ENCODE measurements at regions of chr3 and their contacts with region 1.

Region 1: DNA sequence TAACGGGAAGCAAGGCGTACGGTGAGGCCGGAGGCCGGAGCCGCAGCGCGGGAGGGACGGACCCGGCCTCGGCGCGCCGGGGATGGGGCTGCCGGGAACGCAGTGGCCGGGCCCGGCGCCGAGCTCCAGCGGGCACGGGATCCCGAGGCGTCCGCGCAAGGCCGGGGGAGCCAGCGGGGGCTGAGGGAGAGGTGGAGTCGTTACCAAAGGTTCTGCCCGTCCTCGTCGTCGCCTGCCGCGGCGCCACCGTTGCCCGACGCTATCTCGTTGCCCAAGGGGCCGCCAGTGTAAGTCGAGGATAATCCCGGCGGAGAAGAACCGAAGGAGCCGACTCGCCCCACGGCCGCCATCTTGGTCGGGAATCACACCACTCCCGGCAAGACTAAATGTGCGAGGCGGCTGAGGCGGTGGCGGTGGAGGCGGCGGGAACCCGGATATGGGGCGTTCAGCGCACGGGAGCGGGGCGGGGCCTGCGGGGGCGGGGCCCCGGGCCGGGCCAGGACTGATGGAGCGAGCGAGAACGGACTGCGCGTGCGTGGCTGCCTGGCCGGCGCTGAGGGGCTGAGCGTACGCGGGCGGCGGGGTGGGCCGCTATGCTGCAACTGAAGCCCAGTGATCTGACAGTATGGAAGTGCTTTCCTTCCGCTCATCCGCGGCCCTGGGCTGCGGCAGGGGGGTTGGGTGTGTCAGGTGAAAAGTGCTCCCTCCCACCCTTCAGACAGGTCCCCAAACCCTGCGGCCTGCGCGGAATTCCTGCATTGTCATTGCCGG is at the start of gene DYNC1LI1:
- H3K4me3 Mint-ChIP-seq: peak within 1 kb of the TSS; percentile 87
- H3K27ac Mint-ChIP-seq: peak within 1 kb of the TSS; percentile 92
- H3K4me1 Mint-ChIP-seq: peaks cover 16% of the 10 kb centered on the region
- H3K27me3 Mint-ChIP-seq: no peaks in the 10 kb centered on the region

Region 2: DNA sequence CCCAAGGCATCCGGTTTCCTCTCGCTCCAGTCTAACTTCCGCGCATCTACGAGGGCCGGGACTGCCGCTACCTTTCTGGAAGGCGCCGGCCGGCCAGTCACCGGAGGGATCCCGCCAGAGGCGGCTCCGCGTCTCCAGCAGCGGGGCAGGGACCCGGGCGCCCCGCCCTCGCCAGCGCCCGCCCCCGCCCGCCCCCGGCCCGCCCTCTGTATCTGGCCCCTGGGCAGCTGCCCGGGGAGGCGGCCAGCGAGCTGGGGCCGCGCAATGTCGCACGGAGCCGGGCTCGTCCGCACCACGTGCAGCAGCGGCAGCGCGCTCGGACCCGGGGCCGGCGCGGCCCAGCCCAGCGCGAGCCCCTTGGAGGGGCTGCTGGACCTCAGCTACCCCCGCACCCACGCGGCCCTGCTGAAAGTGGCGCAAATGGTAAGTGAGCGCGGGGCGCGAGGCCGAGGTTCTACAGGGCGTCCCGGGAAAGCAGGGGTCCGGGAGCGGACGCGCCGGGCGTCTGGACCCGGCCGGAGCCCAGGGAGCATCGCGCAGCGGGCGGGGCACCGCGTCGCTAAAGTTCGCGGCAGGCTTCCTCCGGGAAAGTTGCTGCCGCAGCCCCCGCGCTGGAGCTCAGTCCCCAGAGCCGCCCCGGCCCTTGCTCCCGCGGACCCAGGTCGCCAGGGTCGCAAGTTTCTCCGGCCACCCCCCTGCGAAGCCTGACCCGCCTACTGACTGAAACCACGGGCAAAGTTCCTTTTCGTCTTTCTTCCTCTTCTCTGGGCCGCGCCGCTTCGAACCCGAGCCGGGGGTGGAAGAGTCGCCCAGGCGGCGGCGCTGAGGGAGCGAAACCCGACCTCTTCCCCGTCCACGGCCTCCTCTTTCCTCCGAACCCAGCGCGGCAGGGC is 178.7 kb before region 1 on chr3 and contains the start of gene CMTM7:
- intact Hi-C with region 1: loop called (anchors 10 kb)
- H3K4me3 Mint-ChIP-seq: peak within 1 kb of the TSS; percentile 98
- H3K27ac Mint-ChIP-seq: peak within 1 kb of the TSS; percentile 98
- H3K4me1 Mint-ChIP-seq: peaks cover 54% of the 10 kb centered on the region
- H3K27me3 Mint-ChIP-seq: no peaks in the 10 kb centered on the region

Region 3: DNA sequence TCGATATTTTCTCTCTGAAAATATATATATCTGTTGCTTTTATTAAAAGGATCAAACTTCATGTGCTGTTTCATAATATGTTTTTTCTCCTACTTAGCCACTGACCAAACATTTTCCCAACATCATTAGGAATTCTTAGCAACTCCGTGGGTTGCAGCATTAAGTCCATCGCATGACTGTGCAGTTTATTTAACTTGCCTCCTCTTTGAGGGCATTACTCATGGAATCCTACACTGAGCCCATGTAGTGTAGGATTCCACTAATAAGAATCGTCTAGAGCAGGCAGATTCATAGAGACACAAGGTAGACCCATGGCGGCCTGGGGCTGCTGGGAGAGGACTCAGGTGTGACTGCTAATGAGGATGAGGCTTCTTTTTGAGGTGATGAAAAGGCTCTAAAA is 117.3 kb before region 1 on chr3:
- intact Hi-C with region 1: no loop called
- H3K4me3 Mint-ChIP-seq: no peak overlapping the region
- H3K27ac Mint-ChIP-seq: no peak overlapping the region
- H3K4me1 Mint-ChIP-seq: peaks cover 30% of the 10 kb centered on the region
- H3K27me3 Mint-ChIP-seq: no peaks in the 10 kb centered on the region

Region 4: GRCh38 chr3:32522682-32523081 is 47.9 kb before region 1 on chr3:
- intact Hi-C with region 1: loop called (anchors 2 kb)
- H3K4me3 Mint-ChIP-seq: no peak overlapping the region
- H3K27ac Mint-ChIP-seq: no peak overlapping the region
- H3K4me1 Mint-ChIP-seq: peaks cover 8% of the 10 kb centered on the region
- H3K27me3 Mint-ChIP-seq: no peaks in the 10 kb centered on the region

Measured in dendritic cell treated with granulocyte-macrophage colony-stimulating factor and Interleukin-4, amounts not matched to agents 40 ng/mL and 50 ng/mL, for 4 days (primary cell).